A673 (cell line): ENCODE measurements at regions of chr6 and their contacts with region 1.

Region 1: DNA sequence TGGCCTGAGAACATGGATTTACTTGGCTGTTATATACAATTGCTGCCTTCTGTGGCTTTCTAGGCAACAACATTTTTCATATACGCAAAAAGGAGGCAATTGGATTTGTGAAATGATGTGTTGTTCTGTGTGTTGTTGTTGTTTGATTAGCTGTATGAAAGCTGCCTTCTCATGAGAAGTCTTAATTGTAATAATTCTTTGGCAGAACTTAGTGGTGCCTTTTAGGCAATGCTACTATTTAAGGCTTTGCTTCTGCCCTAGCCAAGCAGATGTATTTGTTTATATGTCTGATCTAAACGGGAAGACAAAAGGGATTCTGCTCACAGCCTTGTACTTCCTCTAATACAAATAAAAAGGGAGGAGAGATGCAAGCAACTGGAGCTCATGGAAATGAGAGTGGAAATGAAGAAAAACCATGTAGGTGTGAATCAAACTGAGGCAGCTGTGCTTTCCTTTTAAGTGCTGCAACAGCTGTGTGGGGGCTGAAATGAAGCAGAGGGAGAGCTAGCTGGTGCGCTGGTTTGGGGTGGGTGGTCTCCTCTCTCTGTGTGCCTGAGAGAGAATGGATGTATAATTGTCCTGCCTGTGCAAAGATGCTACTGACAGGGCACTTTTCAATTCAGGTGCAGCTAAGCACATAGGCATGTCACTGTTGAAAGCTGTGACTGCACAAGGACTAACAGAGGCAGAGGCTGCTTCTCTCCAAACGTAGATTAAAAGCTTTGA is 386.9 kb upstream of the MAN1A1 start:
- DNase-seq: no peak
- H3K4me3 ChIP-seq: no peak overlapping the region
- H3K27ac ChIP-seq: no peak overlapping the region
- H3K4me1 ChIP-seq: no peaks in the 10 kb centered on the region
- H3K27me3 ChIP-seq: peaks cover 15% of the 10 kb centered on the region
- CTCF ChIP-seq: no peak

Region 2: DNA sequence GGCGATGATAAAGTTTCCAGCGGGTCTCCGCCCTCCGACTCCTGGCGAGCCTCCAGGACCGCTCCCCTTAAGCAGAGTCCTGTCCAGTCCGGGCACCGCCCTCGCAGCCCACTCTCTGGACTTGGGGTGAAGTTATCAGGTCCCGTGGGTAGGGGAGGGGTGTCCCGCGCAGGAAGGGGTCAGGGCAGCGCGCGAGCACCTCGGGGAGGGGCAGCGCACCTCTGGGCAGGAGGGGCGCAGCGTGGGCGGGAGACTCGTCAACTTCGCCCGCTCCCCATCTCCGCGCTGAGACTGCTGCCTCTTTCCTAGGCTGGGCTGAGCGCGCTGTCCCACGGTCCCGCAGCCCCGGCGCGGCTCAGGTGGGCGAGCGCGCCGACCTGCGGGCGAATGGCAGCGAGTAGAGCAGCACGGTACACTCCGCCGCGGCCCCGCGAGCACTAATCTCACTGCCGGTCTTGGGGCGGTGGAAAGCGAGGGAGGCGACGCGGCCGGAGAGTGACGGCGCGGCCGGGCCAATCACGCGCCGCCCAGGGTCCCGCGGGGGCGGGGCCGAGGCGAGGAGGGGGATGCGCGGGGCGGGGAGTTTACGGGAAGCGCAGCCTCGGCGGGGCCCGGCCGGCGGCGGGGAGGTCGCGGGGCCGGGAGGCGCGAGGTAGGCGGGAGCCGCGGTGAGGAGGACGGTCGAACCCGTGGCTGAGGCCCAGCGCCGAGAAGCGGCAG is 387.0 kb before region 1 on chr6 and contains the start of gene MAN1A1:
- CTCF ChIA-PET with region 1: no interaction called
- POLR2A ChIA-PET with region 1: no interaction called
- intact Hi-C with region 1: loop called (anchors 10 kb)
- DNase-seq: peak; percentile 82
- H3K4me3 ChIP-seq: peak within 1 kb of the TSS; percentile 52
- H3K27ac ChIP-seq: no peak within 1 kb of the TSS
- H3K4me1 ChIP-seq: peaks cover 6% of the 10 kb centered on the region
- H3K27me3 ChIP-seq: peaks cover 96% of the 10 kb centered on the region
- CTCF ChIP-seq: no peak
- total RNA-seq, gene MAN1A1: 0.06 TPM in 1 of 2 replicates, not detected in the other